Calu3 (cell line): ENCODE measurements at regions of chr10 and their contacts with region 1.

Region 1: DNA sequence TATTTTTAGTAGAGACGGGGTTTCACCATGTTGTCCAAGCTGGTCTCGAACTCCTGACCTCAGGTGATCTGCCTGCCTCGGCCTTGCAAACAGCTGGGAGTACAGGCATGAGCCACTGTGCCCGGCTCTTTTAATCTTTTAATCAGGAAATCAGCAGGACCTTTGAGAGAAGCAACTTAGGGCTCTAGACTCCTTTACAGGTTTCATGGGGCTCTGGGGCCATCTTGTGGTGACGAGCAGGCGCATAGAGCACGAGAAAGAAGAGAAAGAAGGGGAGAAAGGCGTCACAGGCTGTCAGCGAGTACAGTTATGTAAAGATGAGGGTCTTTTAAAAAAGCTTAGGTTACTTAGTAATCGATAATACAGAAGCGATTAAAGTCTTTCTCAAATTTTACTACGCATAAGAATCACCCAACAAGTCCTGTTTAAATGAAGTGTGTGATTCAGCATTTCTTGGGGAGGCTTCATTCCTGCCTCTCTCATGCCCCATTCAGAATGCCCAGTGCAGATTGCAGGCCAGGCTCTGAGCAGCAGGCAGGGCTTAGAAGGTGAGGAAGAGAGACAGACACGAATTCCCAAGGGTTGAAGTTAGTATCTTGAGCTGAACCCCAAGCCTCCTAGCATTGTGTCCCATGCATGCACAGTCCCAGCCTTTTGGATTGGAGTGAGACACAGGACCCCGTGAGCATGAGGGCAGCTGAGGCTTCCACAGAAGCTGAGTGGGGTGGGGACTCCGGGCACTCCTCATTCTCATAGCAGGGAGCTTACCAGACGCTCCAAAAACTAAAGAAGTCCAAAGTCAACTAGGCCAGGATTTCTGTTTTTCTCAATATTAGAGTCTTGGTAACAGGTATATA is 23.6 kb upstream of the PFKP start:
- DNase-seq: peak; percentile 79
- H3K4me3 Mint-ChIP-seq: no peak overlapping the region
- H3K27ac Mint-ChIP-seq: peak overlapping the region; percentile 25
- H3K4me1 Mint-ChIP-seq: peaks cover 39% of the 10 kb centered on the region
- H3K27me3 Mint-ChIP-seq: no peaks in the 10 kb centered on the region
- CTCF ChIP-seq: peak; percentile 45

Region 2: GRCh38 chr10:2572611-2573010 is 471.1 kb before region 1 on chr10:
- CTCF ChIA-PET with region 1: interaction called, 10 read pairs
- intact Hi-C with region 1: no loop called
- DNase-seq: no peak
- H3K4me3 Mint-ChIP-seq: no peak overlapping the region
- H3K27ac Mint-ChIP-seq: no peak overlapping the region
- H3K4me1 Mint-ChIP-seq: no peaks in the 10 kb centered on the region
- H3K27me3 Mint-ChIP-seq: no peaks in the 10 kb centered on the region
- CTCF ChIP-seq: no peak

Region 3: GRCh38 chr10:2619472-2619871 is 424.3 kb before region 1 on chr10:
- CTCF ChIA-PET with region 1: no interaction called
- intact Hi-C with region 1: loop called (anchors 5 kb)
- DNase-seq: peak; percentile 10
- H3K4me3 Mint-ChIP-seq: no peak overlapping the region
- H3K27ac Mint-ChIP-seq: no peak overlapping the region
- H3K4me1 Mint-ChIP-seq: no peaks in the 10 kb centered on the region
- H3K27me3 Mint-ChIP-seq: peaks cover 13% of the 10 kb centered on the region
- CTCF ChIP-seq: no peak

Region 4: GRCh38 chr10:2839081-2839725 is 204.5 kb before region 1 on chr10:
- CTCF ChIA-PET with region 1: no interaction called
- intact Hi-C with region 1: loop called (anchors 1 kb)
- DNase-seq: peak; percentile 52
- H3K4me3 Mint-ChIP-seq: no peak overlapping the region
- H3K27ac Mint-ChIP-seq: no peak overlapping the region
- H3K4me1 Mint-ChIP-seq: no peaks in the 10 kb centered on the region
- H3K27me3 Mint-ChIP-seq: peaks cover 73% of the 10 kb centered on the region
- CTCF ChIP-seq: peak; percentile 59

Region 5: DNA sequence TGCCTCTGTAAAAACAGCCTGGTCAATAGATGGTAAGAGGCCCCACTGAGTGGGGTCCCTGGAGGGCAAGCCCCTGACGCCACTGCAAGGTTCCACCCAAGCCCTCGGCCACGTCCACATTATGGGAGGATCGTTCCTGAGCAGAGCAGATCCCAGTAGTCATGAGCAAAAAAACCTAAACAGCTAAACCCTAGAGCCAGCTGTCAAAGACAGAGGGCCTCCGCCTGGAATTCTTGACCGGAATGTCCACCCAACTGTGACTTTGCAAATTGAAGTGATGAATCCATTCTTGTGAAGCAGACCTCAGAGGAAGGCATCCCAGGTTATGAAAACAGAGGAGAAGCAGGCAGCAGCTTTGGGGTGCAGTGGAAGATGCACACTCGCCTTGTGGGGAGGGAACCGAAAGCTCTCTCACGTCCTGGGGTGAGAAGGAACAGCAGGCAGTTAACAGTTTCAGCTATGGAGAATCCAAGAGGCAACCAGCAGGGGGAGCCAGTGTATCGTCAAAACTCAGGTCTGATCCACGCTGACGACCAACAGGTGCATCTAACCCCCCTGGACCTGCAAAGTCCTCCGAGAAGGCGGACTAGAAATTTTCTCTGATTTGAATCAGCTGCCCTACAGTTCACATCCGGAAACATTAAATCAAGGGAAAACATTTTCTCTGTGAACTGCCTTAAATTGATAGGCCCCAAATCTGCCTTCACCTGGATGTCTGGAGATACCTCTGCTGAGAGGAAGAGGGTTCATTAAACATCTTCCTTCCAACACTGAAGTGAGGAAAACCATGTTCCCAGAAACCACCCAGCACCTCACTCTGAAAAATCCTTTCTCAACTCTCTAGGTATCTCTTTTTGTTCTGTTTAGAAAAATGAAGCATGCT is 115.5 kb before region 1 on chr10:
- CTCF ChIA-PET with region 1: interaction called, 10 read pairs
- intact Hi-C with region 1: loop called (anchors 1 kb)
- DNase-seq: peak; percentile 83
- H3K4me3 Mint-ChIP-seq: no peak overlapping the region
- H3K27ac Mint-ChIP-seq: no peak overlapping the region
- H3K4me1 Mint-ChIP-seq: peaks cover 19% of the 10 kb centered on the region
- H3K27me3 Mint-ChIP-seq: peaks cover 24% of the 10 kb centered on the region
- CTCF ChIP-seq: peak; percentile 82

Region 6: GRCh38 chr10:2938869-2939268 is 104.9 kb before region 1 on chr10:
- CTCF ChIA-PET with region 1: interaction called, 3 read pairs
- intact Hi-C with region 1: loop called (anchors 1 kb)
- DNase-seq: no peak
- H3K4me3 Mint-ChIP-seq: no peak overlapping the region
- H3K27ac Mint-ChIP-seq: no peak overlapping the region
- H3K4me1 Mint-ChIP-seq: no peaks in the 10 kb centered on the region
- H3K27me3 Mint-ChIP-seq: peaks cover 86% of the 10 kb centered on the region
- CTCF ChIP-seq: no peak

Region 7: GRCh38 chr10:2978111-2978510 is 65.6 kb before region 1 on chr10:
- CTCF ChIA-PET with region 1: no interaction called
- intact Hi-C with region 1: loop called (anchors 5 kb)
- DNase-seq: no peak
- H3K4me3 Mint-ChIP-seq: no peak overlapping the region
- H3K27ac Mint-ChIP-seq: no peak overlapping the region
- H3K4me1 Mint-ChIP-seq: no peaks in the 10 kb centered on the region
- H3K27me3 Mint-ChIP-seq: no peaks in the 10 kb centered on the region
- CTCF ChIP-seq: no peak

Region 8: GRCh38 chr10:3025300-3025699 is 18.4 kb before region 1 on chr10:
- CTCF ChIA-PET with region 1: no interaction called
- intact Hi-C with region 1: no loop called
- DNase-seq: no peak
- H3K4me3 Mint-ChIP-seq: no peak overlapping the region
- H3K27ac Mint-ChIP-seq: no peak overlapping the region
- H3K4me1 Mint-ChIP-seq: no peaks in the 10 kb centered on the region
- H3K27me3 Mint-ChIP-seq: peaks cover 65% of the 10 kb centered on the region
- CTCF ChIP-seq: no peak

Region 9: GRCh38 chr10:3248888-3249758 is 205.4 kb after region 1 on chr10:
- CTCF ChIA-PET with region 1: no interaction called
- intact Hi-C with region 1: no loop called
- DNase-seq: peak; percentile 25
- H3K4me3 Mint-ChIP-seq: no peak overlapping the region
- H3K27ac Mint-ChIP-seq: peak overlapping the region; percentile 61
- H3K4me1 Mint-ChIP-seq: peaks cover 8% of the 10 kb centered on the region
- H3K27me3 Mint-ChIP-seq: peaks cover 36% of the 10 kb centered on the region
- CTCF ChIP-seq: no peak